Dendritic cell treated with granulocyte-macrophage colony-stimulating factor and Interleukin-4, amounts not matched to agents 40 ng/mL and 50 ng/mL, for 4 days (primary cell): ENCODE measurements at regions of chr19 and their contacts with region 1.

Region 1: GRCh38 chr19:54029930-54030490 is 33.7 kb downstream of the VSTM1 start:
- H3K4me3 Mint-ChIP-seq: peak overlapping the region; percentile 30
- H3K27ac Mint-ChIP-seq: no peak overlapping the region
- H3K4me1 Mint-ChIP-seq: peaks cover 25% of the 10 kb centered on the region
- H3K27me3 Mint-ChIP-seq: peaks cover 9% of the 10 kb centered on the region

Region 2: DNA sequence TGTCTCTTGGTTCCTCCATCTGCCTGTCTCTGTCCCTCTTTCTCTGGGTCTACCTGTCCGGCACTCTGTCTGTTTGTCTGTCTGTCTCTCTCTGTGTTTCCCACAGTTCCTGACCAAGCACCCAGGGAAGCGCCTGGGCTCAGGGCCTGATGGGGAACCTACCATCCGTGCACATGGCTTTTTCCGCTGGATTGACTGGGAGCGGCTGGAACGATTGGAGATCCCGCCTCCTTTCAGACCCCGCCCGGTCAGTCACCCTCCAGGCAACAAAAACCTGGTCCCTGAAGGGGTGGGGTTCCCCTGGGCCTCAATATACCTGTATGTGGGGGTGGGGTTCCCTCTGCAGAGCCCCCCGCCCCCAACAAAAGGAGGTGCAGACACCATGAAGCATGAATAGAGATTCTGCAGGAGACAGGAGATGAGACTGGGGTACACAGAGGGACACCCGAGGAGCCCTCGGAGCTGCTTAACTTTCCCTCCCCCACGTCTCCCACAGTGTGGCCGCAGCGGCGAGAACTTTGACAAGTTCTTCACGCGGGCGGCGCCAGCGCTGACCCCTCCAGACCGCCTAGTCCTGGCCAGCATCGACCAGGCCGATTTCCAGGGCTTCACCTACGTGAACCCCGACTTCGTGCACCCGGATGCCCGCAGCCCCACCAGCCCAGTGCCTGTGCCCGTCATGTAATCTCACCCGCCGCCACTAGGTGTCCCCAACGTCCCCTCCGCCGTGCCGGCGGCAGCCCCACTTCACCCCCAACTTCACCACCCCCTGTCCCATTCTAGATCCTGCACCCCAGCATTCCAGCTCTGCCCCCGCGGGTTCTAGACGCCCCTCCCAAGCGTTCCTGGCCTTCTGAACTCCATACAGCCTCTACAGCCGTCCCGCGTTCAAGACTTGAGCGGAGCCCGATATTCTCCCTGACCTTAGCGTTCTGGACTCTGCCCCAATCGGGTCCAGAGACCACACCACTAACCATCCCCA is 123.5 kb before region 1 on chr19:
- intact Hi-C with region 1: loop called (anchors 10 kb)
- H3K4me3 Mint-ChIP-seq: no peak overlapping the region
- H3K27ac Mint-ChIP-seq: no peak overlapping the region
- H3K4me1 Mint-ChIP-seq: peaks cover 42% of the 10 kb centered on the region
- H3K27me3 Mint-ChIP-seq: peaks cover 78% of the 10 kb centered on the region

Region 3: GRCh38 chr19:53977429-53977990 is 52.5 kb before region 1 on chr19:
- intact Hi-C with region 1: loop called (anchors 10 kb)
- H3K4me3 Mint-ChIP-seq: peak overlapping the region; percentile 44
- H3K27ac Mint-ChIP-seq: peak overlapping the region; percentile 51
- H3K4me1 Mint-ChIP-seq: peaks cover 36% of the 10 kb centered on the region
- H3K27me3 Mint-ChIP-seq: peaks cover 68% of the 10 kb centered on the region

Region 4: GRCh38 chr19:53991224-53992113 is 38.5 kb before region 1 on chr19 and contains the start of gene CACNG6:
- intact Hi-C with region 1: no loop called
- H3K4me3 Mint-ChIP-seq: peak within 1 kb of the TSS; percentile 50
- H3K27ac Mint-ChIP-seq: no peak within 1 kb of the TSS
- H3K4me1 Mint-ChIP-seq: peaks cover 13% of the 10 kb centered on the region
- H3K27me3 Mint-ChIP-seq: peaks cover 55% of the 10 kb centered on the region

Region 5: GRCh38 chr19:54231077-54231931 is 201.3 kb after region 1 on chr19:
- intact Hi-C with region 1: no loop called
- H3K4me3 Mint-ChIP-seq: no peak overlapping the region
- H3K27ac Mint-ChIP-seq: no peak overlapping the region
- H3K4me1 Mint-ChIP-seq: peaks cover 10% of the 10 kb centered on the region
- H3K27me3 Mint-ChIP-seq: peaks cover 2% of the 10 kb centered on the region